Ovary (tissue), 10 donors: ENCODE measurements at regions of chr9 and their contacts with region 1.

Region 1: DNA sequence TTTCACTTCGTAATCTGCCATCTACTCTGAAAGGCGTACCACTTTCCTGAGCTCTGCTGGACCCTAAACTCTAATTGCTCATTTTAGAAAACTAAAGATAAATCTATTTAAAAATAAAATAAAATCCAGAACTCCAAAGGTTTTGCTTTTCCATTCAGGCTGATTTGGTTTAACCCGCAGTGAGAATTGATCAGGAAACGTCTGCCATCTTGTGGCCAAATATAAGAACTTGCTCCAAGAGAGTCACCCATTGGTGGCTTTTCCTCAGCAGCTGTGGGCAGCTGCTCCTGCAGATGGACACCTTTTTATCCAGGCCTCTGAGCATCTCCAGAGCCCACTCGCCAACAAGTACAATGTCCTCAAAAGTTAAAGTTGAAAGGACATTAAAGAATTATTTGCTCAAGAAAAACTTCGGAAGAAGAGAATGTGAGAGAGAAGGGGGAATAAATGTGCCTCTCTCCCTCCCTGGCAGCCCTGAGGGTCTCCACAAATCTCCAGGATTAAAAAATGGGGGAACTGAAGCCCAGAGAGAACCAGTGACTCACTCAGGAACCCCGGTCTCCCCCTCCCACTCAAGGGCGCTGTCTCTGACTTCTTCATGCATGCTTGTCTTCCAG is 4.1 kb downstream of the SAXO1 start:
- DNase-seq: peak in 2 of 5 donors; percentile 39 to 53
- H3K4me3 ChIP-seq: no peak overlapping the region
- H3K27ac ChIP-seq: no peak overlapping the region
- H3K4me1 ChIP-seq: no peaks in the 10 kb centered on the region
- H3K27me3 ChIP-seq: no peaks in the 10 kb centered on the region
- CTCF ChIP-seq: peak; percentile 38 to 64 (median 63)
- EP300 ChIP-seq: no peak
- POLR2A ChIP-seq: no peak

Region 2: GRCh38 chr9:17802249-17802857 is 1226.6 kb before region 1 on chr9:
- intact Hi-C with region 1: loop called in 1 of 4 experiments (anchors 10 kb)
- DNase-seq: no peak
- H3K4me3 ChIP-seq: no peak overlapping the region
- H3K27ac ChIP-seq: no peak overlapping the region
- H3K4me1 ChIP-seq: no peaks in the 10 kb centered on the region
- H3K27me3 ChIP-seq: no peaks in the 10 kb centered on the region
- CTCF ChIP-seq: peak in 1 of 3 donors; percentile 16
- EP300 ChIP-seq: no peak
- POLR2A ChIP-seq: no peak

Region 3: DNA sequence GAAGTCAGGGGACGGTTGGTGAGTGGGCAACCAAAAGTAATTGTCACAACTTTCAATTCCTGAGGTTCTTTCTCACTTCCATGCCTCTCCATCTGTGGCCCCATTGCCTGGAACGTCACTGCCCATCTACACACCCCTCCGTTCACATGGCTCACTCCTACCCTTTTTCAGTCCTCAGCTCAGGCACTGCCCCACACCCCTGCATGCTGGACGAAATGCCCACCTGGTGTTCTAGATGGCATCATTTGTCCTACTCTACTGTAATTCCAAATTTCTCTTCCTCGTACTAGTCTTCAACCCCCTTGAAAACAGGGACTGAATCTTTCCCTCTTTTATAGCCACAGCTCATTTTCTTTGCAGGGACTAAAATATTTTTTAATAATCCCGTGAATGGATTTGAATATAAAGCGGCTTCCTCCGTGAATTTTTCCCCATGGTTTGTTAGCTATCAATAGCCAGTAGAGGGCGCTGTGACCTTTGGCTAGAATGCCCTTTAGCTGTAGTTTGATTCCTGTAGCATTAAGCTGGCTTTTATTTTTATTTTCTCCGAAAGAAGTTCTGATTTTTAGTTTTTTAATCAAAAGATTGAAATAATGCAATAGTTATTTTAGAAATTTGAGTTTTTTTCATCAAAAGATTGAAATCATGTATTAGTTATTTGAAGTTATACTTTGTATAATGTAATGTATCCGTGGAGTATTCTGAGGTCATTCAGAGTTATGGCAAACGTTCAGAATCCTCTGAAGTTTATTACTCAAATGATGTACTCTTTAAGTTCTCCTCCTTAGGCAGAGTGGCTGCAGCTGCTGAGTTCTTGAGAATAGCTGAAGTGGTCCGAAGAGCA is 1218.0 kb before region 1 on chr9:
- intact Hi-C with region 1: loop called in 2 of 4 experiments (anchors 10 kb)
- DNase-seq: peak; percentile 34 to 73 (median 50)
- H3K4me3 ChIP-seq: no peak overlapping the region
- H3K27ac ChIP-seq: no peak overlapping the region
- H3K4me1 ChIP-seq: no peaks in the 10 kb centered on the region
- H3K27me3 ChIP-seq: no peaks in the 10 kb centered on the region
- CTCF ChIP-seq: peak; percentile 67 to 81 (median 78)
- EP300 ChIP-seq: no peak
- POLR2A ChIP-seq: no peak

Region 4: GRCh38 chr9:18250053-18250452 is 778.9 kb before region 1 on chr9:
- intact Hi-C with region 1: loop called in 3 of 4 experiments (anchors 5 kb)
- DNase-seq: no peak
- H3K4me3 ChIP-seq: no peak overlapping the region
- H3K27ac ChIP-seq: no peak overlapping the region
- H3K4me1 ChIP-seq: no peaks in the 10 kb centered on the region
- H3K27me3 ChIP-seq: no peaks in the 10 kb centered on the region
- CTCF ChIP-seq: no peak
- EP300 ChIP-seq: no peak
- POLR2A ChIP-seq: no peak

Region 5: DNA sequence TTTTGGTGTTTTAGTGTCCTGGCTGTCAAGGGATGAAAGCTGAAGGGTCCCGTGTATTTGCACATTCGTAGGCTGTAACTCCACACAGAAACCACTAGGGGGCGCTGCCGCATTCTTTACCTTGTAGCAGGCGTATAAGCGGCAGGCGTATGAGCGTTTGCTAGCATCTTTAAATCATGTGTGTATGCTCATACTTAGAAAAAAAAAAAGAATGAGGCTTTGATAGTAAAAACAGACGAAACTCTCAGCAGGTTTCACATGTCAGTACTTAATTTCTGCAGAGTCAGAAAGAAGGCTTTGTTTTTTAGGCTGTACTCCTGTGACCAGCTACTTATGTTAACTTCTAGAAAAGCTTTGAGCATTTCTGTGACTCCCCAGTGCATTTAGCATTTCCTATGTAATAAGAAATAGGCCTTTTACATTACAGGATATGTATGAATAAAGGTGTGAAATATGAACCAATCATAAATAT is 773.7 kb before region 1 on chr9:
- intact Hi-C with region 1: loop called in 3 of 4 experiments (anchors 5 kb)
- DNase-seq: peak; percentile 70 to 85 (median 82)
- H3K4me3 ChIP-seq: no peak overlapping the region
- H3K27ac ChIP-seq: no peak overlapping the region
- H3K4me1 ChIP-seq: no peaks in the 10 kb centered on the region
- H3K27me3 ChIP-seq: no peaks in the 10 kb centered on the region
- CTCF ChIP-seq: peak; percentile 73 to 85 (median 80)
- EP300 ChIP-seq: no peak
- POLR2A ChIP-seq: no peak

Region 6: GRCh38 chr9:18442629-18443491 is 586.1 kb before region 1 on chr9:
- intact Hi-C with region 1: loop called in 1 of 4 experiments (anchors 10 kb)
- DNase-seq: peak; percentile 63 to 80 (median 76)
- H3K4me3 ChIP-seq: no peak overlapping the region
- H3K27ac ChIP-seq: no peak overlapping the region
- H3K4me1 ChIP-seq: peaks cover 5% of the 10 kb centered on the region
- H3K27me3 ChIP-seq: no peaks in the 10 kb centered on the region
- CTCF ChIP-seq: peak; percentile 69 to 86 (median 79)
- EP300 ChIP-seq: no peak
- POLR2A ChIP-seq: no peak